Dendritic cell treated with granulocyte-macrophage colony-stimulating factor and Interleukin-4, amounts not matched to agents 40 ng/mL and 50 ng/mL, for 4 days (primary cell): ENCODE measurements at regions of chr1 and their contacts with region 1.

Region 1: DNA sequence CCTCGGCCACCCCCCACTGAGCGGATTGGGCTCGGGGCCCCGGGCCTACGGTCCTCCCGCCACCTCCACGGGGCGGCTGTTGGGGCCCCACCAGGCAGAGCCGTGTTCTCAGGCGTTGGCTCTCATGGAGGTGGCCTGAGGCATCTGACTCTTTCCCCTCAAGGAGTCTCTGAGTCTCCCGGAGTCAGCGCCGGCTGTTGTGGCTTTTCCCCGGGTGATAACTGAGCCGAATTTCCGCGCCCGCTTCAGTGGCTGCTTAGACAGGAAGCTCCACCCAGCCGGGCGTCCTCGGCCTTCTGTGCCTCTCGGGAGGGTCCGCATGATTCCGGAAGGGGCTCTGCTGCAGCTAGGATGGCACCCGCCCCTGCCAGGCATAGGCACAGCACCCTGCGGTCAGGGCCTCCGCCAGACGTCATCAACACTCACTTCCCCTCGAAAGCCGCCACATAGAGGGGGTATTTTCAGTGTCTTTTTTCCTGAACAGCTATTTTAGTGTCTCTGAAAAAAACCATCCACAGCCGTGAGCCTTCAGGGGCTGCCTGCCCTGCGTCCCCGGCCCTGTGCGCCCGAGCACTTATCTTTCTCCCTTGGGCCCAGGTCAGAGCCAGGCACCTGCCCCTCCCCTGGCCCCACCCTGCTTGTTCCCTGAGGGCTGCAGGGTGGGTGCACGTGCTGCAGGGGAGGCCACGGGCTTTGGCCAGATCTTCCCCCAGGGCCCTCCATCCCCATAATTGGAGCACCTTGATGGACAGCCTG is 72.9 kb downstream of the SKI start:
- H3K4me3 Mint-ChIP-seq: peak overlapping the region; percentile 73
- H3K27ac Mint-ChIP-seq: peak overlapping the region; percentile 91
- H3K4me1 Mint-ChIP-seq: peaks cover 97% of the 10 kb centered on the region
- H3K27me3 Mint-ChIP-seq: no peaks in the 10 kb centered on the region

Region 2: GRCh38 chr1:2255420-2256369 is 45.3 kb before region 1 on chr1:
- intact Hi-C with region 1: loop called (anchors 5 kb)
- H3K4me3 Mint-ChIP-seq: no peak overlapping the region
- H3K27ac Mint-ChIP-seq: no peak overlapping the region
- H3K4me1 Mint-ChIP-seq: peaks cover 60% of the 10 kb centered on the region
- H3K27me3 Mint-ChIP-seq: no peaks in the 10 kb centered on the region

Region 3: GRCh38 chr1:2290595-2291510 is 10.2 kb before region 1 on chr1:
- intact Hi-C with region 1: loop called (anchors 1 kb)
- H3K4me3 Mint-ChIP-seq: peak overlapping the region; percentile 71
- H3K27ac Mint-ChIP-seq: peak overlapping the region; percentile 96
- H3K4me1 Mint-ChIP-seq: peaks cover 100% of the 10 kb centered on the region
- H3K27me3 Mint-ChIP-seq: peaks cover 15% of the 10 kb centered on the region

Region 4: GRCh38 chr1:2314803-2315673 is 14.0 kb after region 1 on chr1:
- intact Hi-C with region 1: loop called (anchors 2 kb)
- H3K4me3 Mint-ChIP-seq: peak overlapping the region; percentile 64
- H3K27ac Mint-ChIP-seq: peak overlapping the region; percentile 87
- H3K4me1 Mint-ChIP-seq: peaks cover 55% of the 10 kb centered on the region
- H3K27me3 Mint-ChIP-seq: peaks cover 16% of the 10 kb centered on the region

Region 5: GRCh38 chr1:2330511-2331199 is 29.6 kb after region 1 on chr1:
- intact Hi-C with region 1: no loop called
- H3K4me3 Mint-ChIP-seq: no peak overlapping the region
- H3K27ac Mint-ChIP-seq: no peak overlapping the region
- H3K4me1 Mint-ChIP-seq: no peaks in the 10 kb centered on the region
- H3K27me3 Mint-ChIP-seq: peaks cover 21% of the 10 kb centered on the region